Left ventricle myocardium inferior (tissue), 1 donor: ENCODE measurements at regions of chr9 and their contacts with region 1.

Region 1: DNA sequence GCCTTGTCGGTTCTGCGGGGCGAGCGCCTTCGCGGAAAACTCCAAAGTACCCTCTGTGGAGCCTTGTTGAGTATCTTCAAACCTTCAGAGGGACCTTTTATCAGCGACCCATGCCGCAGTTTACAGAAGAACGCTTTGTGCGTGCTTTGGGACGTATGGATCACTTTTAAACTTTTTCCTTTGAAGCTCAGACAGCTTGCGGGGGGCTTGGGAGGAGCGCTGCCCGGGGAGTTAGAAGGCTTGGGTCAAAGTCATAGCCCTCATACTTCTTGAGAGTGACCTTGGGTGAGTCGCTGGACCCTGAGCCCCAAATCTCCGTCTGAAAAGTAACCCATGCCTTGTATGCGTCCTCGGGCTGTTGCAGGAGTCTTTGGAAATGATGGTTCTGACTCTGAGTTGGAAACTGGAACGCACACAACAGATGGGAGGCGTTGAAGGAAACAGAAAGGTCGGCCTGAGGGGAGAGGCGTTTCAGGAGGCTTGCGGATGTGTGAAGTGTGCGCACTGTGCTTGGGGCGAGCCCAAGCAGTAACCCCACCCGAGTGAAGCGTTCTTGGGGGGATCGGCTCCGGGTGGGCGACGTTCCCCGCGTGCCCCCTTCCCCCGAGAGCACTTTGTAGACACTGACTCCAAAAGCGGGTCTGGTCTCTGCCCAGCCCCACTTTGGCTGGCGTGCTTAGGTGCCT is 661 bp upstream of the SLC25A51 start:
- DNase-seq: no peak
- H3K4me3 ChIP-seq: peak overlapping the region; percentile 98
- H3K27ac ChIP-seq: peak overlapping the region; percentile 94
- H3K4me1 ChIP-seq: peaks cover 38% of the 10 kb centered on the region
- H3K27me3 ChIP-seq: no peaks in the 10 kb centered on the region
- CTCF ChIP-seq: no peak

Region 2: DNA sequence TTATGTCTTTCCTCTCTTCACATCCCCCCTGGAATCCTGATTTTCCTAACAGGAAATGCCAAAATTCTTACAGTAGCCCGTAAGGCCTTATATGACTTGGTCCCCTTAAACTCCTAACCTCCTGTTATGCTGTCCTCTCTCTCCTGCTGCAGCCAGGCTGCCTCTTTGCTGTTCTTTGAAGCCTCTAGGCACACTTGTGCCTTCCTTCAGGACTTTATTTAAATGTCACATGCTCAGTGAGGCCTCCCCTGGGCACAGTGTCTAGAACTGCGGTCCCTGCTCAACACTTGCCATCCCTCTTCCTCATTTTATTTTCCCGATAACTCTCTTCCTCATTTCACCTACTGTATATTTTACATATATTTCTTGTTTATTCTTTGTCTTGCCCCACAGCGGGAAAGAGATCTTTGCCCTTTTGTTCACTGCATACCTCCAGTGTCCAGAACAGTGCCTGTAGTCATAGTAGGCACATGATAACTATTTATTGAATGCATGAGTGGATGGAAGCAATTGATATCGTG is 169.9 kb after region 1 on chr9:
- intact Hi-C with region 1: loop called (anchors 5 kb)
- DNase-seq: no peak
- H3K4me3 ChIP-seq: no peak overlapping the region
- H3K27ac ChIP-seq: no peak overlapping the region
- H3K4me1 ChIP-seq: peaks cover 25% of the 10 kb centered on the region
- H3K27me3 ChIP-seq: no peaks in the 10 kb centered on the region
- CTCF ChIP-seq: no peak